Activated CD4-positive, alpha-beta T cell treated with anti-CD3 and anti-CD28 coated beads, Interleukin-2, amount 10 ng/mL, durations not matched to agents 7 days and 5 days (primary cell): ENCODE measurements at regions of chr11 and their contacts with region 1.

Region 1: GRCh38 chr11:33996498-33997454 is 54.8 kb upstream of the CAPRIN1 start:
- DNase-seq: peak; percentile 80
- H3K4me3 Mint-ChIP-seq: no peak overlapping the region
- H3K27ac Mint-ChIP-seq: no peak overlapping the region
- H3K4me1 Mint-ChIP-seq: peaks cover 7% of the 10 kb centered on the region
- H3K27me3 Mint-ChIP-seq: peaks cover 27% of the 10 kb centered on the region

Region 2: GRCh38 chr11:34006876-34007275 is 10.1 kb after region 1 on chr11:
- CTCF ChIA-PET with region 1: interaction called, 11 read pairs
- POLR2A ChIA-PET with region 1: no interaction called
- DNase-seq: no peak
- H3K4me3 Mint-ChIP-seq: no peak overlapping the region
- H3K27ac Mint-ChIP-seq: no peak overlapping the region
- H3K4me1 Mint-ChIP-seq: no peaks in the 10 kb centered on the region
- H3K27me3 Mint-ChIP-seq: peaks cover 32% of the 10 kb centered on the region